Activated naive CD4-positive, alpha-beta T cell treated with anti-CD3 and anti-CD28 coated beads for 36 hours (primary cell): ENCODE measurements at regions of chr6 and their contacts with region 1.

Region 1: DNA sequence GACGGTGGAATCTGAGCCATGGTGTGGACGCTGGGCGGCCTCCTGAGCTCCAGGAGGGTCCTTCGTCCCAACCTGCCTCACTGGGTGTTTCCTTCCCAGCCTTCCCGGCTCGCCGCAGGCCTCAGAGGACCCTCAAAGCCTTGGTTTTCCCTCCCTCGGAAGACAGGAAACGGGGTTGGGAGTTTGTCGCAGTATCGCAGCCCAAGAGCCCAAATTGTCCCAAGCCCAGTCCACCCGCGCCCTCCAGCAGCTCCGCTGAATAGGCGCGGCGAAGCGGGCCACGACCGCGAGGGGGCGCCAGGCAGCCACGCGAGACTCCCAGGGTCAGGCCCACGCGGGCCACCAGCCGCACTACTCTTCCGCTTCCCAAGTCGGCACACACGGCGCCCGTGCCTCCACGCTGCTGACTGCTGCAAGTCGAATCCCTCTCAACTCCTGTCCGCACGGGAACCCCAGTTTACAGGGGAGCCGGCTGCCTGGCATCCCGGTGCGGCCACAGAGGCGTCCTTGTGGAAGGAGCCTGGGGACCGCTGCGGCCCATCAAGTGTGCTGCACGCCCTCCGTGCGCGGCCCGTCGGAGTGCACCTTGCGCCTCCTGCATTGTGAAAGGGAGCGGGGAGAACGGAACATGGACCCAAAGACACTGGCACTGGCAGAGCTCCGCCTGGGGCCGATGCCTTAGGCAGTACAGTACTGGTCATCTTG is 40.4 kb upstream of the HMGA1 start:
- DNase-seq: peak; percentile 90
- H3K4me3 Mint-ChIP-seq: peak overlapping the region; percentile 73
- H3K27ac Mint-ChIP-seq: peak overlapping the region; percentile 63
- H3K4me1 Mint-ChIP-seq: peaks cover 9% of the 10 kb centered on the region
- H3K27me3 Mint-ChIP-seq: no peaks in the 10 kb centered on the region

Region 2: GRCh38 chr6:34182751-34183531 is 13.3 kb before region 1 on chr6:
- CTCF ChIA-PET with region 1: interaction called, 17 read pairs
- intact Hi-C with region 1: no loop called
- DNase-seq: peak; percentile 83
- H3K4me3 Mint-ChIP-seq: peak overlapping the region; percentile 76
- H3K27ac Mint-ChIP-seq: peak overlapping the region; percentile 86
- H3K4me1 Mint-ChIP-seq: peaks cover 17% of the 10 kb centered on the region
- H3K27me3 Mint-ChIP-seq: no peaks in the 10 kb centered on the region

Region 3: GRCh38 chr6:34236131-34236996 is 40.1 kb after region 1 on chr6 and contains the start of gene HMGA1:
- CTCF ChIA-PET with region 1: interaction called, 11 read pairs
- intact Hi-C with region 1: loop called (anchors 1 kb)
- DNase-seq: peak; percentile 89
- H3K4me3 Mint-ChIP-seq: peak within 1 kb of the TSS; percentile 91
- H3K27ac Mint-ChIP-seq: peak within 1 kb of the TSS; percentile 93
- H3K4me1 Mint-ChIP-seq: peaks cover 42% of the 10 kb centered on the region
- H3K27me3 Mint-ChIP-seq: no peaks in the 10 kb centered on the region
- total RNA-seq, gene HMGA1: 705 to 712 TPM

Region 4: DNA sequence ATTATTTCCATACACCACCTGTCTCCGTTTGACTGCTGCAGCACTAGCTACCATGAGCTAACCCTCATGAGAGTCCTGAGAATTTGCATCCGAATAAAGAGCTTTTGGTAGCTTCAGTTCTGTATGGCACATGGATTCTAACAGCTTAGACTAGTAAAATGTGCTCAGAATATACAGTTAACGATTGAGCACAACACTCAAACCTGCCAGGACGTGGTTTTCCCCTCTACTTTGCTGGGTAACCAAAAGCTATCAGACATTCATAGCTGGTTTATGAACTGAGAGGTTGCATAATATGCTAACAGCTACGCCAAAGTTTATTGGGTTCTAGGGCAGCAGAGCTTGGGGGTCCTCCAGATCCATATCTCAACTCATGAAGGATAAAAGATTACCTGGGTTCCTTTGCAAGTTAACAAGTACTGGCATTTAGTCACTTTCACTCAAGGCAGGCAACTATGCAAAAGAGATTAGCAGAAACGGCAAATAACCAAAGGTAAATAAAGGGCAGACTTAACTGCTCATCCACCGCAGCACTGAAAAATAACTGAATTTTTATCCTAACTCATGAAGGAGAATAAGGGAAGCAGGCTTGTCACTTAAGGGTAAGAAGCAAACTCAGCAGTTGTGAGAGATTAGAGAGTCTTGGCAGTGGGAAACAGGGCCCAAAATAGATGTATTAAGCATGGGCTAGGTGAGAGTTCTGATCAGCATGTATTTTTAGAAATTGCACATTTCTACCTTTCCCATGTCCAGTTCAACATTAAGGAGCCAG is 166.8 kb after region 1 on chr6:
- CTCF ChIA-PET with region 1: no interaction called
- intact Hi-C with region 1: no loop called
- DNase-seq: no peak
- H3K4me3 Mint-ChIP-seq: no peak overlapping the region
- H3K27ac Mint-ChIP-seq: no peak overlapping the region
- H3K4me1 Mint-ChIP-seq: peaks cover 42% of the 10 kb centered on the region
- H3K27me3 Mint-ChIP-seq: no peaks in the 10 kb centered on the region

Region 5: DNA sequence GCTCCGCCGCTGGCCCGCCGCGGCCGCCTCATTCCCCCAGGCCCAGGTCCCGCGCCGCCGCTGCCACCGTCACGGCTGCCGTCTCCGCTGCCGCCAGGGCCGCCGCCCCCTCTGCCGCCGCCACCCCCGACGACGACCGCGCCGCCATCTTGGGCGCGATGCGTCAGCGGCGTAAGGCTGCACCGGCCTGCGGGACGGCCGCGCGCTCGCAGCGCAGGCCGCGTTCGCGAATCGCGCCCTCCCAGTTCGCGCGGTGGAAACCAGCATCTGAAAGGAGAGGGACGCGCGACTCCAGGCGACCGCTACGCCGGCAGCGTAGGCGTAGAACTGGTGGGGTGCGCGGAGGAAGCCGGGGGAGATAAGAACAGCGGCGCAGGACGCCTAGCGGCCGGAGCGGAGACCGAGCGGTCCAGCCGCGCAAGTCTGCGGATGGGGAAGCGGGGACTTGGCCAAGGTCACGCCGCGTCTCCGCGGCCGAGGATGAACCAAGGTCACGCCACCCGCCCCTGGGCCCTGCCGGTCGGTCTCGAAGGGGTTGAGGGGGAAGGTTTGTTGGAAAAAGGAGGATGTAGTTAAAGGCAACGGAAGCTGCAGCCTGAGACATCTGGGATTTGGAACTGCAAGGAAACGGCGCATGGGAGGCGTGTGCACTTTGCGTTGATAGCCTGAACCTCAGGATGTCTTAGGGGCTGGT is 196.4 kb after region 1 on chr6 and contains the start of gene NUDT3:
- CTCF ChIA-PET with region 1: interaction called, 5 read pairs
- intact Hi-C with region 1: loop called (anchors 1 kb)
- DNase-seq: peak; percentile 92
- H3K4me3 Mint-ChIP-seq: peak within 1 kb of the TSS; percentile 66
- H3K27ac Mint-ChIP-seq: peak within 1 kb of the TSS; percentile 88
- H3K4me1 Mint-ChIP-seq: peaks cover 27% of the 10 kb centered on the region
- H3K27me3 Mint-ChIP-seq: no peaks in the 10 kb centered on the region
- total RNA-seq, gene NUDT3: 14.0 to 14.3 TPM

Region 6: GRCh38 chr6:34414999-34415858 is 219.0 kb after region 1 on chr6:
- CTCF ChIA-PET with region 1: interaction called, 13 read pairs
- intact Hi-C with region 1: loop called (anchors 1 kb)
- DNase-seq: peak; percentile 46
- H3K4me3 Mint-ChIP-seq: no peak overlapping the region
- H3K27ac Mint-ChIP-seq: no peak overlapping the region
- H3K4me1 Mint-ChIP-seq: peaks cover 12% of the 10 kb centered on the region
- H3K27me3 Mint-ChIP-seq: no peaks in the 10 kb centered on the region

Region 7: DNA sequence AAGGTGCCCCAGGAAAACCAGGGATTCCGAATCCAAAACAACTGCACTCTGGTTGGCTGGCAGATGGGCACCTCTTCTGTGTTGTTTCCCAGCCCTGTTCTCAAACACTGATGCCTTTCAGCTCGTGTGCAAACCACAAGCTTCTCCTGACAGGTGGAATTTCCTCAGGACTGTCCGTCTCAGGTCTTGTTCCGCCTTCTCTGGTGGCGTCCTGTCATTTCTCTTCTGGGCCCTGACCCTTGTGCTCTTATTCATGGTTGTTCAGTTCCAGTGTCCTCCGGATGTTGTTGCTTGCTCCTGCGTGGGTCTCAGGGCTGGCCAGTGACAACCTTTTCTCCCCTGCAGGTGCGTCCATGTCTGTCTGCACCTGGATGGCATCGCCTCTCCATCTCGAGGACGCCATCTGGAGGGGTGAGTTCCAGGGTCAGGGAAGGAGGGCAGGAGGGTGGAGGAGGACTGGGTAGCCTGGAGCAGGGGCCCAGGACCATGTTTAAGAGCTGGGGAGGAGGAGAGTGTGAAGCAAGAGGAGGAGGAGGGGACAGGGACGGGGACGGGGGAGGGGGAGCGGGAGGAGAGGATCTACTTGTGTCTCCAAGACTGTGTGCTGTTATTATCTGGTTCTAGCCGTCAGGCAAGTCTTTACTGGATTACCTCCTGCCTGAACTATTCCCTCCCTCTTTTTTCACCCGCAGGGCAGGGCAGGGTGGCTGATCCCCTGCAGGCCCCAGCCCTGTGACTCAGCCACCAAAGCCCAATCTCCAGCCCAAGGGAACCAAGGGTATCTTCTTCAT is 1348.4 kb after region 1 on chr6:
- CTCF ChIA-PET with region 1: no interaction called
- intact Hi-C with region 1: no loop called
- DNase-seq: no peak
- H3K4me3 Mint-ChIP-seq: no peak overlapping the region
- H3K27ac Mint-ChIP-seq: no peak overlapping the region
- H3K4me1 Mint-ChIP-seq: peaks cover 1% of the 10 kb centered on the region
- H3K27me3 Mint-ChIP-seq: no peaks in the 10 kb centered on the region